CD4-positive, alpha-beta memory T cell (primary cell): ENCODE measurements at regions of chr20 and their contacts with region 1.

Region 1: GRCh38 chr20:36613974-36614373 is 8.4 kb downstream of the RAB5IF start:
- DNase-seq: no peak
- H3K4me3 ChIP-seq: no peak overlapping the region
- H3K4me3 Mint-ChIP-seq: no peak overlapping the region
- H3K27ac ChIP-seq: no peak overlapping the region
- H3K27ac Mint-ChIP-seq: peak overlapping the region in 6 of 7 donors; percentile 43 to 74 (median 58)
- H3K4me1 ChIP-seq: peaks cover 15% of the 10 kb centered on the region
- H3K4me1 Mint-ChIP-seq: peaks cover 8 to 15% (median 10%) of the 10 kb centered on the region in 4 donors
- H3K27me3 ChIP-seq: no peaks in the 10 kb centered on the region
- H3K27me3 Mint-ChIP-seq: no peaks in the 10 kb centered on the region

Region 2: DNA sequence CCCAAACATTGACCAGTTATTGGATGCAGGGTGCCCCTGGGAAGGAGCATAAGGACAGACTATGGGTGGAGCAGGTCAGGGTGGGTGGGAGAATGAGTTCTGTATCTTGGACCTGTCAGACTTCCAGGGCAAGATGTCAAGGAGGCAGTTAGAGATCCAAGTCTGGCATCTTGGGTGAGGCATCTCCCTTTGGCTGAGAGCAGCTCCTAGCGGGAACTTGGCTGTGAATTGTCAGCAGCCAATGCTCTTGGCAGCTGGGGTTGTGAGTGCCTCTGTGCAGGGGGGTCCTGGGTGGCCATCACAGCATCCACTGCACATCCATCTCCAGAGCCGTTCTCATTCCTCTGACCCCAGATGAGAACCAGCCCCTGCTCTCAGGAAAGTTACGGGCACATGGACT is 189.7 kb before region 1 on chr20:
- CTCF ChIA-PET with region 1: no interaction called
- POLR2A ChIA-PET with region 1: no interaction called
- intact Hi-C with region 1: no loop called
- DNase-seq: no peak
- H3K4me3 ChIP-seq: no peak overlapping the region
- H3K4me3 Mint-ChIP-seq: no peak overlapping the region
- H3K27ac ChIP-seq: no peak overlapping the region
- H3K27ac Mint-ChIP-seq: no peak overlapping the region
- H3K4me1 ChIP-seq: no peaks in the 10 kb centered on the region
- H3K4me1 Mint-ChIP-seq: peaks cover 0 to 3% (median 0%) of the 10 kb centered on the region in 4 donors
- H3K27me3 ChIP-seq: no peaks in the 10 kb centered on the region
- H3K27me3 Mint-ChIP-seq: peaks cover 14 to 15% of the 10 kb centered on the region in 2 donors

Region 3: GRCh38 chr20:36467076-36467999 is 146.6 kb before region 1 on chr20:
- CTCF ChIA-PET with region 1: no interaction called
- POLR2A ChIA-PET with region 1: no interaction called
- intact Hi-C with region 1: no loop called
- DNase-seq: peak; percentile 55 to 70 (median 58)
- H3K4me3 ChIP-seq: peak overlapping the region in 1 of 2 donors; percentile 29
- H3K4me3 Mint-ChIP-seq: peak overlapping the region; percentile 5 to 82 (median 73)
- H3K27ac ChIP-seq: peak overlapping the region; percentile 67
- H3K27ac Mint-ChIP-seq: peak overlapping the region; percentile 87 to 99 (median 95)
- H3K4me1 ChIP-seq: peaks cover 75% of the 10 kb centered on the region
- H3K4me1 Mint-ChIP-seq: peaks cover 53 to 90% (median 77%) of the 10 kb centered on the region in 4 donors
- H3K27me3 ChIP-seq: no peaks in the 10 kb centered on the region
- H3K27me3 Mint-ChIP-seq: no peaks in the 10 kb centered on the region

Region 4: GRCh38 chr20:36538026-36538722 is 75.8 kb before region 1 on chr20:
- CTCF ChIA-PET with region 1: no interaction called
- POLR2A ChIA-PET with region 1: no interaction called
- intact Hi-C with region 1: no loop called
- DNase-seq: no peak
- H3K4me3 ChIP-seq: no peak overlapping the region
- H3K4me3 Mint-ChIP-seq: no peak overlapping the region
- H3K27ac ChIP-seq: no peak overlapping the region
- H3K27ac Mint-ChIP-seq: no peak overlapping the region
- H3K4me1 ChIP-seq: no peaks in the 10 kb centered on the region
- H3K4me1 Mint-ChIP-seq: no peaks in the 10 kb centered on the region
- H3K27me3 ChIP-seq: no peaks in the 10 kb centered on the region
- H3K27me3 Mint-ChIP-seq: peaks cover 0 to 3% of the 10 kb centered on the region in 2 donors

Region 5: DNA sequence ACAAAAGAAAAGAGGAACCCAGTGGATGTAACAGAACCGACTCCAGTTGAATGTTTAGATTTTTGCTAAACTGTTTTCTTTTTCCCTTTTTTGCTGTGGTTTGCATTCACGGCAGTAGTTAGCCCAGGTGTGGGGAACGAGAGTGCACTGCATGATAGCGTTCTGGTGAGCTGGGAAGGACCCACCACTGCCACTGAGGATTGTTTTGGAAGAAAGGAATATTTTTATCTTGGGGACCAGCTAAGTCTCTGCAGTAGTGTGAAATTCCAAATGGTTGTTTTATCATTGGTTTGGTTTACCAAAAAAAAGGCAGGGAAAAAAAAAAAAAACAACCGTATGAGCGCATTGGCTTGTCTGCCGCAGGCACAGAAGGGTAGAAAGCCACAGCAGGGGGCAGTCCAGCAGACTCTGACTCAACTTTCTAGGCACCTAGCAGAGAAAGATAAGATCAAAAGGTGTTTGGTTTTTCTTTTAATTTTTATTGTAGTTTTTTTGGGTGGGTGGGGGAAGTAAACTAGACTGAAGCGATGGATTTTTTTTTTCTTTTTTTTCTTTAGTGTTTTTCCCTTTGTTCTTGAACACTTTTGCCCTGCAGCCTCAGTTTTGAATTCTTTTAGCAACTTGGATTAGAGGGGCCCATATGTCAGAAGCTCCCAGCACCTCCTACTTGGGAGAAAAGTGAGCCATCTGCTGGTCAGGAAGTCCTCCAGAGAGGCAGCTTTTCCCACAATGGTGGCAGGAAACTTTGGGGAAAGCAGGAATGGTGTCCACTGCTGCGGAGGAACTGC is 21.9 kb before region 1 on chr20:
- CTCF ChIA-PET with region 1: interaction called, 21 read pairs
- POLR2A ChIA-PET with region 1: interaction called, 7 read pairs
- intact Hi-C with region 1: no loop called
- DNase-seq: peak; percentile 51 to 87 (median 63)
- H3K4me3 ChIP-seq: no peak overlapping the region
- H3K4me3 Mint-ChIP-seq: peak overlapping the region in 7 of 8 donors; percentile 26 to 77 (median 57)
- H3K27ac ChIP-seq: peak overlapping the region; percentile 38
- H3K27ac Mint-ChIP-seq: peak overlapping the region; percentile 77 to 93 (median 86)
- H3K4me1 ChIP-seq: peaks cover 51% of the 10 kb centered on the region
- H3K4me1 Mint-ChIP-seq: peaks cover 29 to 64% (median 44%) of the 10 kb centered on the region in 4 donors
- H3K27me3 ChIP-seq: no peaks in the 10 kb centered on the region
- H3K27me3 Mint-ChIP-seq: no peaks in the 10 kb centered on the region

Region 6: DNA sequence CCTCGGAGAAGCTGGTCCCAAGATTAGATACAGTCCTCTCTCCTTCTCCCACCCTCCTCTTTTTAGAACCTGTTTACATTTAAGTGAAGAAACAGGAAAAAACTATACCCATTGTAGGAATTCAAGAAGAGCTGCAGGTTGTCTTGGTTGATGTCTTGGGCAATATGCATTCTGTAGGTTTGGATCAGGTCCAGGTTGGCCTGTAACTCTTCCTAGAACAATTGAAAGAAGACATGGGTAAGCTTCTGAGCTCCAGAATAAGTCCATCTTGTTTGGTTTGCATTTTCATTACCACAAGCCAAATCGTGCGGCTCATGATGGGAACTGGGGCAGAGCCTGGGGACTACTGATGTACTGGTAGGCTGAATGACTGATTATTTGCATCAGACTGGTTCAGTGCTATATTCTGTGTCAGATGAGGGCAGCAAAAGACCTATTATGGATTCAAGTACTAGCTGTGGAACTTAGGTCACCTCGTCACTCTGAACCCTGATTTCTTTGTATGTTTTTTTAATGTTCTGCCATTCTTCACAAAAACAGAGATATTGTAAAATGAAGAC is 52.3 kb after region 1 on chr20:
- CTCF ChIA-PET with region 1: interaction called, 10 read pairs
- POLR2A ChIA-PET with region 1: no interaction called
- intact Hi-C with region 1: no loop called
- DNase-seq: no peak
- H3K4me3 ChIP-seq: no peak overlapping the region
- H3K4me3 Mint-ChIP-seq: no peak overlapping the region
- H3K27ac ChIP-seq: no peak overlapping the region
- H3K27ac Mint-ChIP-seq: peak overlapping the region in 1 of 7 donors; percentile 27
- H3K4me1 ChIP-seq: no peaks in the 10 kb centered on the region
- H3K4me1 Mint-ChIP-seq: peaks cover 0 to 1% (median under 1%) of the 10 kb centered on the region in 4 donors
- H3K27me3 ChIP-seq: no peaks in the 10 kb centered on the region
- H3K27me3 Mint-ChIP-seq: no peaks in the 10 kb centered on the region

Region 7: DNA sequence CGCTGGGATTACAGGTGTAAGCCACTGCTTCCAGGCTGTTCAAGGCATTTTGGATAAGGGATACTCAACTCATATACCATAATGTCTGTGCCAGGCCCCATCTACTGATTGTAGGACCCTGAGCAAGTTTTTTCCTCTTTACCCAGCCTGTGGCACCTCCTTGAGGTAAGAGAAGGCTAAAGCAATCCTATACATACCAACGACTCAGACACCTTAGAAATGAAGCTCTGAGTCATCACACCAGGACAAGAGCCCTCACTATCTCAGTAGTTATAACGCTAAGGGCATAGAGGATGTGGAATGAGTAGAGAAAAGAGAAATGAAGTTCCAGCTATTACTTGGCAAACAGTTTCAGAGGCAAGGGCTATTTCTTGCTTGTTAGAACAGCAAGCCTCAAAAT is 115.0 kb after region 1 on chr20:
- CTCF ChIA-PET with region 1: interaction called, 4 read pairs
- POLR2A ChIA-PET with region 1: no interaction called
- intact Hi-C with region 1: loop called (anchors 5 kb)
- DNase-seq: no peak
- H3K4me3 ChIP-seq: no peak overlapping the region
- H3K4me3 Mint-ChIP-seq: no peak overlapping the region
- H3K27ac ChIP-seq: no peak overlapping the region
- H3K27ac Mint-ChIP-seq: peak overlapping the region in 1 of 7 donors; percentile 84
- H3K4me1 ChIP-seq: peaks cover 14% of the 10 kb centered on the region
- H3K4me1 Mint-ChIP-seq: peaks cover 18 to 31% (median 25%) of the 10 kb centered on the region in 4 donors
- H3K27me3 ChIP-seq: no peaks in the 10 kb centered on the region
- H3K27me3 Mint-ChIP-seq: no peaks in the 10 kb centered on the region

Region 8: GRCh38 chr20:36886859-36887751 is 273.1 kb after region 1 on chr20:
- CTCF ChIA-PET with region 1: no interaction called
- POLR2A ChIA-PET with region 1: no interaction called
- intact Hi-C with region 1: loop called (anchors 2 kb)
- DNase-seq: peak; percentile 67 to 74 (median 72)
- H3K4me3 ChIP-seq: no peak overlapping the region
- H3K4me3 Mint-ChIP-seq: peak overlapping the region in 4 of 8 donors; percentile 26 to 51 (median 30)
- H3K27ac ChIP-seq: no peak overlapping the region
- H3K27ac Mint-ChIP-seq: peak overlapping the region; percentile 42 to 87 (median 81)
- H3K4me1 ChIP-seq: peaks cover 12% of the 10 kb centered on the region
- H3K4me1 Mint-ChIP-seq: peaks cover 12 to 22% (median 14%) of the 10 kb centered on the region in 4 donors
- H3K27me3 ChIP-seq: no peaks in the 10 kb centered on the region
- H3K27me3 Mint-ChIP-seq: no peaks in the 10 kb centered on the region